SK-N-SH (cell line): ENCODE measurements at regions of chr14 and their contacts with region 1.

Region 1: DNA sequence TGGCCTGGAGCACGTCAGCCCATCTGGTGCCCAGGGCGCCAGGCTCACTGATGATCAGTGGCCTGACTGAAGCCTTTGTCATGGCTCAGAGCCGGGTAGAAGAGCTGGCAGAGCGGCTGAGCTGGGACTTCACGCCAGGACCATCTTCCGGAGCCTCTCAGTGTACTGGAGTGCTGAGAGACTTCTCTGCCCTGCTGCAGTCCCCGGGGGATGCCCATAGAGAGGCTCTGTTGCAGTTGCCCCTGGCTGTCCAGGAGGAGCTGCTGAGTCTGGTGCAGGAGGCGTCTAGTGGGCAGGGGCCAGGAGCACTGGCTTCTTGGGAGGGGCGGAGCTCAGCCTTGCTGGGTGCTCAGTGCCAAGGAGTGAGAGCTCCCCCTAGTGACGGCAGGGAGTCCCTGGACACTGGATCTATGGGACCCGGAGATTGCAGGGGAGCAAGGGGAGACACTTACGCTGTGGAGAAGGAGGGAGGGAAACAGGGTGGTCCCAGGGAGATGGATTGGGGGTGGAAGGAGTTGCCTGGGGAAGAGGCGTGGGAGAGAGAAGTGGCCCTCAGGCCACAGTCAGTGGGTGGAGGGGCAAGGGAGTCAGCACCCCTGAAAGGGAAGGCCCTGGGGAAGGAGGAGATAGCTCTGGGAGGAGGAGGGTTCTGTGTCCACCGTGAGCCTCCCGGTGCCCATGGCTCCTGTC is 2.0 kb downstream of the KHNYN start:
- DNase-seq: peak; percentile 93
- H3K4me3 ChIP-seq: peak overlapping the region; percentile 71 to 87
- H3K27ac ChIP-seq: peak overlapping the region in 1 of 2 experiments; percentile 40; a peak in 1 of 4 replicates
- H3K4me1 ChIP-seq: peaks cover 21 to 26% of the 10 kb centered on the region in 2 experiments; a peak in 2 of 4 replicates
- H3K27me3 ChIP-seq: no peaks in the 10 kb centered on the region
- CTCF ChIP-seq: peak; percentile 96
- EP300 ChIP-seq: no peak
- RAD21 ChIP-seq: peak; percentile 94

Region 2: GRCh38 chr14:24241829-24242443 is 189.8 kb before region 1 on chr14:
- CTCF ChIA-PET with region 1: interaction called, 19 read pairs
- POLR2A ChIA-PET with region 1: interaction called, 10 read pairs
- DNase-seq: peak; percentile 96
- H3K4me3 ChIP-seq: peak overlapping the region; percentile 68 to 94
- H3K27ac ChIP-seq: peak overlapping the region; percentile 96
- H3K4me1 ChIP-seq: peaks cover 26% of the 10 kb centered on the region in 2 experiments; a peak in 2 of 4 replicates
- H3K27me3 ChIP-seq: no peaks in the 10 kb centered on the region
- CTCF ChIP-seq: peak; percentile 40
- EP300 ChIP-seq: no peak
- RAD21 ChIP-seq: no peak

Region 3: DNA sequence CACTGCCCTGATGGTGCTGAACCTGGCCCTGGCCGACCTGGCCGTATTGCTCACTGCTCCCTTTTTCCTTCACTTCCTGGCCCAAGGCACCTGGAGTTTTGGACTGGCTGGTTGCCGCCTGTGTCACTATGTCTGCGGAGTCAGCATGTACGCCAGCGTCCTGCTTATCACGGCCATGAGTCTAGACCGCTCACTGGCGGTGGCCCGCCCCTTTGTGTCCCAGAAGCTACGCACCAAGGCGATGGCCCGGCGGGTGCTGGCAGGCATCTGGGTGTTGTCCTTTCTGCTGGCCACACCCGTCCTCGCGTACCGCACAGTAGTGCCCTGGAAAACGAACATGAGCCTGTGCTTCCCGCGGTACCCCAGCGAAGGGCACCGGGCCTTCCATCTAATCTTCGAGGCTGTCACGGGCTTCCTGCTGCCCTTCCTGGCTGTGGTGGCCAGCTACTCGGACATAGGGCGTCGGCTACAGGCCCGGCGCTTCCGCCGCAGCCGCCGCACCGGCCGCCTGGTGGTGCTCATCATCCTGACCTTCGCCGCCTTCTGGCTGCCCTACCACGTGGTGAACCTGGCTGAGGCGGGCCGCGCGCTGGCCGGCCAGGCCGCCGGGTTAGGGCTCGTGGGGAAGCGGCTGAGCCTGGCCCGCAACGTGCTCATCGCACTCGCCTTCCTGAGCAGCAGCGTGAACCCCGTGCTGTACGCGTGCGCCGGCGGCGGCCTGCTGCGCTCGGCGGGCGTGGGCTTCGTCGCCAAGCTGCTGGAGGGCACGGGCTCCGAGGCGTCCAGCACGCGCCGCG is 115.7 kb before region 1 on chr14:
- CTCF ChIA-PET with region 1: interaction called, 36 read pairs
- POLR2A ChIA-PET with region 1: no interaction called
- DNase-seq: peak; percentile 60
- H3K4me3 ChIP-seq: no peak overlapping the region
- H3K27ac ChIP-seq: no peak overlapping the region
- H3K4me1 ChIP-seq: peaks cover 0 to 8% of the 10 kb centered on the region in 2 experiments; a peak in 1 of 4 replicates
- H3K27me3 ChIP-seq: peaks cover 12% of the 10 kb centered on the region; the same call in 1 of the 2 replicates
- CTCF ChIP-seq: no peak
- EP300 ChIP-seq: no peak
- RAD21 ChIP-seq: no peak

Region 4: GRCh38 chr14:24339284-24340151 is 92.2 kb before region 1 on chr14 and contains the start of gene RIPK3:
- CTCF ChIA-PET with region 1: interaction called, 445 read pairs
- POLR2A ChIA-PET with region 1: interaction called, 14 read pairs
- DNase-seq: no peak
- H3K4me3 ChIP-seq: no peak within 1 kb of the TSS
- H3K27ac ChIP-seq: no peak within 1 kb of the TSS
- H3K4me1 ChIP-seq: peaks cover 0 to 2% of the 10 kb centered on the region in 2 experiments; a peak in 1 of 4 replicates
- H3K27me3 ChIP-seq: peaks cover 68% of the 10 kb centered on the region
- CTCF ChIP-seq: no peak
- EP300 ChIP-seq: no peak
- RAD21 ChIP-seq: no peak
- polyA plus RNA-seq, gene RIPK3: not detected in 2 replicates

Region 5: DNA sequence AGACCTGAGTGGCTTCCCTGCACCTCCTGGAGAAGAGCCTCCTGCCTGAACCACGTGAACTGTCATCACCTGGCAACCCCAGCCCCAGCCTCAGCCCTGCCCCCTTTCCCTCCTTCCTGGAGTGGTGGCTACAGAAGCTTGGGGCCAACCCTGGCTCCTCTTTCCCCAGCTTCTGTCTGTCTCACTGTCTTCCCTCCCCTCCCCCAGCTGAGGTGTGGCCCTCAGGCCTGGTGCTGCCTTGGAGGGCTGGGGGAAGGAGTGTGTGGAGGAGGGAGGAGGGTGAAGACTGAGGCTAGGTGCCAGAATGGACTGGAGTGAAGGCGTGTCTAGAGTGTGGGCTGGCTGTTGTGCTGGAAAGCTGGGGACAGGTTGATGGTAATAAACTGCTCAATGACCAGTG is 54.1 kb before region 1 on chr14:
- CTCF ChIA-PET with region 1: interaction called, 44 read pairs
- POLR2A ChIA-PET with region 1: no interaction called
- DNase-seq: no peak
- H3K4me3 ChIP-seq: no peak overlapping the region
- H3K27ac ChIP-seq: no peak overlapping the region
- H3K4me1 ChIP-seq: peaks cover 0 to 17% of the 10 kb centered on the region in 2 experiments; a peak in 1 of 4 replicates
- H3K27me3 ChIP-seq: no peaks in the 10 kb centered on the region
- CTCF ChIP-seq: no peak
- EP300 ChIP-seq: no peak
- RAD21 ChIP-seq: no peak

Region 6: DNA sequence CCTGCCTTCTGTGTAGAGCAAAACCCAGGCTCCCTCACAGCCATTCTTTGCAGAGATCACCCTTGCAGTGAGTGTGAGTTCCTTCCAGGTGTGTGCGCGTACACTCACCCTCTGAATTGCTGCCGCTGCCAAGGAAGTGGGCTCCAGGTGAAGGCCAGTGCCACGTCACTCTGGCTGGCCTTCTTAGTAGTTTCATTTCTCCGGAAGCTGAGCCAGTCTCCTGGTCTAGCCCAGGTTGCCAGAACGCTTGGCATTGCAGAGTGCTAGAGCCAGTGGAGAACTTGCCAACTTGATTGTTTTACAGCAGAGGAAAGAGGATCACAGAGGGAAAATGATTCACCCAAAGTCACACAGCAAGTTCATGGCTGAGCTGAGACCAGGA is 13.2 kb before region 1 on chr14:
- CTCF ChIA-PET with region 1: interaction called, 63 read pairs
- POLR2A ChIA-PET with region 1: interaction called, 8 read pairs
- DNase-seq: no peak
- H3K4me3 ChIP-seq: no peak overlapping the region
- H3K27ac ChIP-seq: no peak overlapping the region
- H3K4me1 ChIP-seq: no peaks in the 10 kb centered on the region; a peak in 1 of 4 replicates
- H3K27me3 ChIP-seq: 0 out of 2 replicates have a peak, but pooled peaks cover 5% of the 10 kb centered on the region
- CTCF ChIP-seq: no peak
- EP300 ChIP-seq: no peak
- RAD21 ChIP-seq: no peak